ENCODE measurements at regions of chr11 and their contacts with region 1.

Region 1: DNA sequence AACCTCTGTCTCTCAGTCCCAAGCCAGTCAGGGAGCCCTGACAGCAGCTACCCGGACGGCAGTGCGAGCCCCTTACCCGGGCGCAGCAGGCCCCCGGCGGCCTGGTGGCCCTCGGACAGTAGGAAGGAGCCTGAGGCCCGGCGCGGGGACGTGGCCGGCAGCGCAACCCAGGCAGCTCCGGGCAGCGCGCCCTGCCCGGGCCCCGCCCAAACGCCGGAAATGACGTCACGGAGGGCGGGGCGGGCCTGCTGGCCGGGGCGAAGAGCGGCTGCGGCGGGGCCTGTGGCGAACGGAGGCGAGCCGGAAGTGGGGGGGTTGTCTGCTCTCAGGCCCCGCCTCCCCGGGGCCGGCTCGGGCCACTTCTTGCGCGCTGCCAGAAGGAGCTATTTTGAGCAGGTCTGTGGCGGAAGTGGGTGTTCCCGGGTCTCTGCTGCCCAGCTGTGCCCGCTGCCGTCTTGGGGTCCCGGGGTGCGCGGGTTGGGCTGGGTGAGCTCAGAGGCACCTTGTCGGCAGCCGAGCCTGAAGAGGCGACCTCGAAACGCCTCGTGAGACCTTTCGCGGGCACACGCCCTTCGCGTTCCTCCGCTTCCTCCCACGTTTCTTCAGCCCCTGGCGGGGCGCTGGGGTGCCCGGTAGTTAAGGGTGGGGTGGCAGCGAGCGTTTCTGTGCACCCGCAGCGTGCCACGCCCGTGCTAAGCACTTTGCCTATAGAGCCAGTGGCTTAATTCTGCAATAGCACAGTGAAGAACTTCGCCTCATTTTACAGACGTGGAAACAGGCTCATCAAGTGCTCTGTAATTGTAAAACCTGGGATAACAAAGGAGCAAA is at the start of gene C11orf24:
- H3K4me3 ChIP-seq: peak within 1 kb of the TSS; percentile 84
- H3K27ac ChIP-seq: peak within 1 kb of the TSS; percentile 50; the same call in 1 of the 2 replicates
- H3K4me1 ChIP-seq: no peaks in the 10 kb centered on the region; the same call in 1 of the 2 replicates
- CTCF ChIP-seq: peak; percentile 44

Region 2: DNA sequence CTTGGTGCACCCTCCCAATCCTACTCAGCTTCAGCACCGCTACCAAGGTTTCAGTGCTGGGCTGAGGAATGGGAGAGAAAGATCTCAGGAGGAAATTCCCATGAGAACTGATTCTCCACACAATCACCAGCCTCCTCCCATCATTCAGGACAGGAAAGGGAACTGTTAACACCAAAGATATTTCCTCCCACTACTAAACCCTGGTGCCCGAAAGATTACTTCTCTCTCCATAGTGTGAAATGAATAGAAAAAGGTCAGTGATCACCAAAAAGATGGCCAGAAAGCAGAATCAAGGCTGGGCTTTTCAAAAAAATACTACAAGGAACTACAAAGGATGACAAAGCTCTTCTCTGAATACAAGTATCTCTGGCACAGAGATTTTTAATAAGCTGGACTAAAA is 207.1 kb before region 1 on chr11:
- CTCF ChIA-PET with region 1: no interaction called
- POLR2A ChIA-PET with region 1: no interaction called
- H3K4me3 ChIP-seq: no peak overlapping the region
- H3K27ac ChIP-seq: no peak overlapping the region
- H3K4me1 ChIP-seq: no peaks in the 10 kb centered on the region
- CTCF ChIP-seq: no peak

Region 3: GRCh38 chr11:68257475-68258362 is 14.3 kb before region 1 on chr11:
- CTCF ChIA-PET with region 1: interaction called, 31 read pairs
- POLR2A ChIA-PET with region 1: interaction called, 8 read pairs
- H3K4me3 ChIP-seq: no peak overlapping the region
- H3K27ac ChIP-seq: no peak overlapping the region
- H3K4me1 ChIP-seq: no peaks in the 10 kb centered on the region
- CTCF ChIP-seq: peak; percentile 81

Region 4: GRCh38 chr11:68312117-68312779 is 40.3 kb after region 1 on chr11 and contains the start of gene LRP5:
- CTCF ChIA-PET with region 1: no interaction called
- POLR2A ChIA-PET with region 1: no interaction called
- H3K4me3 ChIP-seq: peak within 1 kb of the TSS; percentile 70
- H3K27ac ChIP-seq: peak within 1 kb of the TSS; percentile 48; the same call in 1 of the 2 replicates
- H3K4me1 ChIP-seq: no peaks in the 10 kb centered on the region
- CTCF ChIP-seq: no peak

Measured in HEK293 (cell line).